ENCODE measurements at regions of chr14 and their contacts with region 1.

Region 1: DNA sequence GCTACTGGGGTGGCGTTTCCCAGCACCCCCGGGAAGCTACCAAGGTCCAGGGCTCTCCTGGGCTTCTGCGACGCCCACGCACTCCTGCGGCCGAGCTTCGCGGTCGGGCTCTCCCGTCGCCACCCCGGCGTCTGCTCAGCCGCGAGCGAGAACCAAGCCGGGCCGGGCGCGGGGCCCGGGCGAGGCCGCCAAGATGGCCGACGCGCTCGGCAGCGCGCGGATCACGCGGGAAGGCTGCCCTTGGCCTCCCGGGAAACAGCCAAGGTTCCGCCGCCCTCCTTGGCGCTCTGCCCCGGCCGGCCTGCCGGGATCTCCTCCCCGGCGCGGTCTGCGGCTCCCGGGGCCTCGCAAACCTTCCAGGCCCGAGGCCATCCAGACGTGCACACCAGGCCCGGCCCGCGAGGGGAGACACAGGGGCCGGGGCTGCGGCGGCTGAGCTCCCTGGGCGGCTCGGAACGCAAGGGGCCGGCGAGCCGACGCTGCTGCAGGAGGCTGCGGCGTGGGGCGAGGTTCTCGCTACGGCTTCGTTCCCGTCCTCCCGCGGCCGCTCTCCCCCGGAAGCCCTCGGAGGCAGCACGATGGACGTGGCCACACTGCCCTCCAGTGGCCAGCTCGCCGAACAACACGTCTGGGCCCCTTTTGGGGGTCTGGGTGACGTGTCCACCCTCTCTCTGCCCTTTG is 23.5 kb upstream of the ZFP36L1 start:
- DNase-seq: peak; percentile 77 to 93 (median 87)
- ATAC-seq: peak; percentile 92
- H3K4me3 ChIP-seq: peak overlapping the region; percentile 63
- H3K4me3 Mint-ChIP-seq: peak overlapping the region; percentile 82 to 95 (median 86)
- H3K27ac ChIP-seq: peak overlapping the region; percentile 95
- H3K27ac Mint-ChIP-seq: peak overlapping the region; percentile 93 to 100 (median 96)
- H3K4me1 ChIP-seq: peaks cover 59 to 62% of the 10 kb centered on the region in 2 donors
- H3K4me1 Mint-ChIP-seq: peaks cover 48 to 89% (median 66%) of the 10 kb centered on the region in 7 donors
- H3K27me3 ChIP-seq: no peaks in the 10 kb centered on the region
- H3K27me3 Mint-ChIP-seq: no peaks in the 10 kb centered on the region

Region 2: GRCh38 chr14:67619446-67620216 is 1196.8 kb before region 1 on chr14 and contains the start of gene ARG2:
- CTCF ChIA-PET with region 1: no interaction called
- POLR2A ChIA-PET with region 1: no interaction called
- intact Hi-C with region 1: loop called in 1 of 2 experiments (anchors 2 kb)
- DNase-seq: peak; percentile 92 to 98 (median 95)
- ATAC-seq: peak; percentile 95
- H3K4me3 ChIP-seq: peak within 1 kb of the TSS; percentile 93
- H3K4me3 Mint-ChIP-seq: peak within 1 kb of the TSS; percentile 89 to 93 (median 90)
- H3K27ac ChIP-seq: peak within 1 kb of the TSS; percentile 82
- H3K27ac Mint-ChIP-seq: peak within 1 kb of the TSS; percentile 70 to 97 (median 94)
- H3K4me1 ChIP-seq: peaks cover 12 to 18% of the 10 kb centered on the region in 2 donors
- H3K4me1 Mint-ChIP-seq: peaks cover 21 to 42% (median 37%) of the 10 kb centered on the region in 7 donors
- H3K27me3 ChIP-seq: no peaks in the 10 kb centered on the region
- H3K27me3 Mint-ChIP-seq: peaks cover 0 to 23% (median 0%) of the 10 kb centered on the region in 5 donors
- total RNA-seq, gene ARG2: 0.46 to 5.1 (median 3.2) TPM

Region 3: DNA sequence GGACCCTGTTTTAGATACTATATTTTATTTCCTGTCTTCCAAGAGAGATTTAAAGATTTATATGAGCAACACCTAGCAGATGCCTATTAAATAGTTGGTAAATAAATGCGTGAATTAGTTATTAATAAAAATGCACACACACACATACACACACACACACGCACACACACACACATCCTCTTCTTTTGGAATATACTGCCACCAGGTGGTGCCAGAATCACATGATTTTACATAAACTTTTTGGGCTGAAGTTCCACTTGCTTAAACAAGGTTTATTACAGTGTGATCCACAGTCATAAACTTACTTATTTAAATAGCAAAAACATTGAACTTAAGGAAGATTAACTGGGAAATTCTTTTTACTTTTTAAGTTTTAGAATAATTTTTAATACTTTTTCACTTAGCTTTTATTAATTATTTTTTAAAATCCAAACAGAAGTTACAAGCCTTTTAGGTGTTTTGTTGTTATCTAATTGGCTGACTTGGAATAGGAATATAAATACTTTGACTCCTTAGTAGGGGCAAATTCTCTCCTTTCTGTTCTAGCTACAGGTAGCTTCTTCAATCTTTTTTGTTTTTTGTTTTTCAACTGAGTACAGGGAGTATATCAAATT is 979.3 kb before region 1 on chr14:
- CTCF ChIA-PET with region 1: interaction called, 5 read pairs
- POLR2A ChIA-PET with region 1: interaction called, 3 read pairs
- intact Hi-C with region 1: loop called (anchors 1 to 5 kb)
- DNase-seq: peak in 7 of 9 donors; percentile 50 to 73 (median 62)
- ATAC-seq: peak; percentile 92
- H3K4me3 ChIP-seq: no peak overlapping the region
- H3K4me3 Mint-ChIP-seq: no peak overlapping the region
- H3K27ac ChIP-seq: no peak overlapping the region
- H3K27ac Mint-ChIP-seq: peak overlapping the region in 2 of 9 donors; percentile 16 to 67
- H3K4me1 ChIP-seq: no peaks in the 10 kb centered on the region
- H3K4me1 Mint-ChIP-seq: peaks cover 0 to 4% (median 0%) of the 10 kb centered on the region in 7 donors
- H3K27me3 ChIP-seq: no peaks in the 10 kb centered on the region
- H3K27me3 Mint-ChIP-seq: no peaks in the 10 kb centered on the region

Region 4: GRCh38 chr14:68084256-68084655 is 732.1 kb before region 1 on chr14:
- CTCF ChIA-PET with region 1: no interaction called
- POLR2A ChIA-PET with region 1: no interaction called
- intact Hi-C with region 1: loop called in 1 of 2 experiments (anchors 10 kb)
- DNase-seq: no peak
- ATAC-seq: no peak
- H3K4me3 ChIP-seq: no peak overlapping the region
- H3K4me3 Mint-ChIP-seq: no peak overlapping the region
- H3K27ac ChIP-seq: no peak overlapping the region
- H3K27ac Mint-ChIP-seq: no peak overlapping the region
- H3K4me1 ChIP-seq: peaks cover 0 to 4% of the 10 kb centered on the region in 2 donors
- H3K4me1 Mint-ChIP-seq: peaks cover 4 to 26% (median 17%) of the 10 kb centered on the region in 7 donors
- H3K27me3 ChIP-seq: no peaks in the 10 kb centered on the region
- H3K27me3 Mint-ChIP-seq: no peaks in the 10 kb centered on the region

Region 5: DNA sequence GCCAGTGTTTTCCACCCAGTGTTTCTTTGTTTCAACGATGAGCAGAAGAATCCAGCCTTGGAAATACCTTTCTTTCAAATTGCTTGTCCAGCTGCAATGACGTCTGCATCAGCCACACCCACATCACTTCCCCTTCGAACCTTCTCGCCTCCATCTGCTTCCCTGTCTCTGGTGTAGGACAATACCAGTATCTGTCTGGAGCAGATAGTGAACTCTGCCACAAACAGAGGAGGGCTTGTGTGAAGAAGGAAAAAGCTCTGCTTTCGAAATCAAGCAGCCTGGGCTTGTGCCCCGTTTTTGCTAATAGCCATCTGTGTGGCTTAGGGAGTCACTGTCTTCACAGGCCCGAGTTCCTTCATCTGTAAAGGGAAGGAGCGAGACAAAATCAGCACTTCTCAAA is 438.9 kb before region 1 on chr14:
- CTCF ChIA-PET with region 1: interaction called, 3 read pairs
- POLR2A ChIA-PET with region 1: interaction called, 27 read pairs
- intact Hi-C with region 1: no loop called
- DNase-seq: no peak
- ATAC-seq: peak; percentile 62
- H3K4me3 ChIP-seq: no peak overlapping the region
- H3K4me3 Mint-ChIP-seq: peak overlapping the region in 7 of 10 donors; percentile 29 to 72 (median 59)
- H3K27ac ChIP-seq: peak overlapping the region; percentile 37
- H3K27ac Mint-ChIP-seq: peak overlapping the region in 7 of 9 donors; percentile 69 to 89 (median 81)
- H3K4me1 ChIP-seq: peaks cover 0 to 38% of the 10 kb centered on the region in 2 donors
- H3K4me1 Mint-ChIP-seq: peaks cover 30 to 84% (median 72%) of the 10 kb centered on the region in 7 donors
- H3K27me3 ChIP-seq: no peaks in the 10 kb centered on the region
- H3K27me3 Mint-ChIP-seq: no peaks in the 10 kb centered on the region

Region 6: GRCh38 chr14:68685419-68686204 is 130.8 kb before region 1 on chr14:
- CTCF ChIA-PET with region 1: interaction called, 3 read pairs
- POLR2A ChIA-PET with region 1: interaction called, 10 read pairs
- intact Hi-C with region 1: no loop called
- DNase-seq: peak; percentile 31 to 74 (median 64)
- ATAC-seq: peak; percentile 91
- H3K4me3 ChIP-seq: no peak overlapping the region
- H3K4me3 Mint-ChIP-seq: peak overlapping the region; percentile 3 to 74 (median 48)
- H3K27ac ChIP-seq: peak overlapping the region; percentile 25
- H3K27ac Mint-ChIP-seq: peak overlapping the region; percentile 74 to 97 (median 91)
- H3K4me1 ChIP-seq: peaks cover 44 to 53% of the 10 kb centered on the region in 2 donors
- H3K4me1 Mint-ChIP-seq: peaks cover 52 to 74% (median 59%) of the 10 kb centered on the region in 7 donors
- H3K27me3 ChIP-seq: no peaks in the 10 kb centered on the region
- H3K27me3 Mint-ChIP-seq: no peaks in the 10 kb centered on the region

Region 7: GRCh38 chr14:68795597-68796417 is 20.6 kb before region 1 on chr14:
- CTCF ChIA-PET with region 1: interaction called, 169 read pairs
- POLR2A ChIA-PET with region 1: interaction called, 1,273 read pairs
- intact Hi-C with region 1: loop called (anchors 1 kb)
- DNase-seq: peak; percentile 77 to 92 (median 86)
- ATAC-seq: peak; percentile 56
- H3K4me3 ChIP-seq: peak overlapping the region; percentile 91
- H3K4me3 Mint-ChIP-seq: peak overlapping the region; percentile 92 to 99 (median 95)
- H3K27ac ChIP-seq: peak overlapping the region; percentile 100
- H3K27ac Mint-ChIP-seq: peak overlapping the region; percentile 91 to 100 (median 98)
- H3K4me1 ChIP-seq: peaks cover 11 to 18% of the 10 kb centered on the region in 2 donors
- H3K4me1 Mint-ChIP-seq: peaks cover 9 to 37% (median 31%) of the 10 kb centered on the region in 7 donors
- H3K27me3 ChIP-seq: no peaks in the 10 kb centered on the region
- H3K27me3 Mint-ChIP-seq: peaks cover 0 to 4% (median 0%) of the 10 kb centered on the region in 5 donors

Region 8: GRCh38 chr14:68926236-68926635 is 109.8 kb after region 1 on chr14:
- CTCF ChIA-PET with region 1: no interaction called
- POLR2A ChIA-PET with region 1: no interaction called
- intact Hi-C with region 1: no loop called
- DNase-seq: peak in 3 of 9 donors; percentile 22 to 30 (median 29)
- ATAC-seq: no peak
- H3K4me3 ChIP-seq: no peak overlapping the region
- H3K4me3 Mint-ChIP-seq: peak overlapping the region in 4 of 10 donors; percentile 15 to 82 (median 30)
- H3K27ac ChIP-seq: no peak overlapping the region
- H3K27ac Mint-ChIP-seq: peak overlapping the region in 8 of 9 donors; percentile 86 to 97 (median 90)
- H3K4me1 ChIP-seq: peaks cover 0 to 72% of the 10 kb centered on the region in 2 donors
- H3K4me1 Mint-ChIP-seq: peaks cover 40 to 96% (median 87%) of the 10 kb centered on the region in 7 donors
- H3K27me3 ChIP-seq: no peaks in the 10 kb centered on the region
- H3K27me3 Mint-ChIP-seq: no peaks in the 10 kb centered on the region

Region 9: GRCh38 chr14:69543341-69544249 is 727.2 kb after region 1 on chr14:
- CTCF ChIA-PET with region 1: no interaction called
- POLR2A ChIA-PET with region 1: no interaction called
- intact Hi-C with region 1: no loop called
- DNase-seq: peak in 1 of 9 donors; percentile 27
- ATAC-seq: peak; percentile 70
- H3K4me3 ChIP-seq: no peak overlapping the region
- H3K4me3 Mint-ChIP-seq: peak overlapping the region in 2 of 10 donors; percentile 13 to 25
- H3K27ac ChIP-seq: no peak overlapping the region
- H3K27ac Mint-ChIP-seq: peak overlapping the region in 1 of 9 donors; percentile 47
- H3K4me1 ChIP-seq: no peaks in the 10 kb centered on the region
- H3K4me1 Mint-ChIP-seq: peaks cover 0 to 17% (median 4%) of the 10 kb centered on the region in 7 donors
- H3K27me3 ChIP-seq: peaks cover 0 to 2% of the 10 kb centered on the region in 2 donors
- H3K27me3 Mint-ChIP-seq: peaks cover 20 to 48% (median 35%) of the 10 kb centered on the region in 5 donors

Measured in naive thymus-derived CD4-positive, alpha-beta T cell (primary cell).